Activated naive CD8-positive, alpha-beta T cell treated with anti-CD3 and anti-CD28 coated beads, Interleukin-2, amount 10 ng/mL, durations not matched to agents 7 days and 5 days (primary cell): ENCODE measurements at regions of chr4 and their contacts with region 1.

Region 1: DNA sequence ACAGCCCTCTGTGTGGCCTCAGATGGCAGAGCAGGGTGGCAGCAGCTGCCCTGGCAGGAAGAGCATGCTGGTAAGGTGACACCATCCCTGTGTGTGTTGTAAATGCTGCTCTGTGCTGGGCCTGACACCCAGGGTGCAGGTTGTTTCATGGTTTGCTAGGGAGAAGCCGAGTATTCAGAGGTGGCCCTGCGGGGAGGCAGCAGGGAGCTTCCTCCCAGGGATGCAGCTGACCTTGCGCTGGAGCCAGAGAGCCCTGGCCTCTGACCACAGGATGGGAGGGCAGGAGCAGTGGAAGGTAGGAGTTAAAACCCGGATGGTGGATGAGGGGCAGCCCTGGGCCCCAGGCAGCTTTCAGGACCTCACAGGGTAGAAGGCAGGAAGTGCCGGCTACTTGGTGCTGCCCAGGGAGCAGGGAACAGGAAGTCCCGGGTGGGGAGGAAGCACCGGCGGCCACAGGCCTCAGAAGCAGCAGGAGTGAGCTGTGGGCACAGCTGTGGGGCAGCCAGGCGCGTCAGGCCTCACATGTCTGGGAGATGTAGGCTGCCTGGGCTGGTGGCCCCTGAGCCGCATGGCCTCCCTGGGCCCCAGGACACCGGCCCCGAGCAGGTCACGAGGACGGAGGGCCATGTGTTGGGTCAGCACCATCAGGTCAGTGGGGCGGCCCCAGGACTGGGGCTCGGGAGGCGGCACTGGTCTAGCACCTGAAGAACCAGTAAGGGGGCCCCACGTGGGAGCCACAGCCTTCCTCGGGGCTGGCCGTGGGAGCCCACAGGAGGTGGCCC is 19.1 kb downstream of the SH3BP2 start:
- DNase-seq: peak; percentile 73
- ATAC-seq: peak; percentile 78
- H3K4me3 Mint-ChIP-seq: peak overlapping the region; percentile 86
- H3K27ac Mint-ChIP-seq: peak overlapping the region; percentile 99
- H3K4me1 Mint-ChIP-seq: peaks cover 53% of the 10 kb centered on the region
- H3K27me3 Mint-ChIP-seq: no peaks in the 10 kb centered on the region

Region 2: GRCh38 chr4:2763511-2763967 is 48.5 kb before region 1 on chr4:
- POLR2A ChIA-PET with region 1: interaction called, 11 read pairs
- DNase-seq: no peak
- ATAC-seq: no peak
- H3K4me3 Mint-ChIP-seq: peak overlapping the region; percentile 67
- H3K27ac Mint-ChIP-seq: peak overlapping the region; percentile 21
- H3K4me1 Mint-ChIP-seq: peaks cover 22% of the 10 kb centered on the region
- H3K27me3 Mint-ChIP-seq: no peaks in the 10 kb centered on the region

Region 3: GRCh38 chr4:2800691-2801596 is 11.1 kb before region 1 on chr4:
- POLR2A ChIA-PET with region 1: interaction called, 60 read pairs
- DNase-seq: peak; percentile 45
- ATAC-seq: peak; percentile 25
- H3K4me3 Mint-ChIP-seq: peak overlapping the region; percentile 95
- H3K27ac Mint-ChIP-seq: peak overlapping the region; percentile 78
- H3K4me1 Mint-ChIP-seq: peaks cover 31% of the 10 kb centered on the region
- H3K27me3 Mint-ChIP-seq: no peaks in the 10 kb centered on the region

Region 4: GRCh38 chr4:2834331-2834987 is 22.4 kb after region 1 on chr4:
- POLR2A ChIA-PET with region 1: interaction called, 17 read pairs
- DNase-seq: peak; percentile 45
- ATAC-seq: peak; percentile 2
- H3K4me3 Mint-ChIP-seq: peak overlapping the region; percentile 68
- H3K27ac Mint-ChIP-seq: peak overlapping the region; percentile 92
- H3K4me1 Mint-ChIP-seq: peaks cover 35% of the 10 kb centered on the region
- H3K27me3 Mint-ChIP-seq: no peaks in the 10 kb centered on the region